Left lung (tissue), 14 donors: ENCODE measurements at regions of chrX and their contacts with region 1.

Region 1: DNA sequence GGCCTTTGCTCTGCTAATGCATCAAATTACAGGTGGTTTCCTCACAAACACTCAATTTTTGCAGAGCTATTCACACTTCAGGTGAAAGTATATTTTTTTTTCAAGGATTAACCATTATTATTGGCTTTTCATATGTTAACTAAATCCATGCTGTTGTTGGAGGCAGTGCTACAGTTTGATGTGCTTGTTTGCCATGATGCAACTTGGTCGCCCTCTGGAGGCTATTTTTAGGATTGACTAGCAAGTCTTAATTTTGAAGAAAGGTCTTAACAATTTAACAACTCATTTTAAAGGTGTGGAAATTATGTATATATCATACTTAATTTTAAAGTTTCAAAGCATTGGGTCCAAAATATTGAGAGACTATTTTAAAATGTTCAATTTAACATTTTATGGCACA is 168.8 kb upstream of the FAM47A start:
- DNase-seq: peak in 2 of 4 donors; percentile 11 to 27
- ATAC-seq: peak; percentile 40
- H3K4me3 ChIP-seq: no peak overlapping the region
- H3K27ac ChIP-seq: no peak overlapping the region
- H3K4me1 ChIP-seq: no peaks in the 10 kb centered on the region
- H3K27me3 ChIP-seq: no peaks in the 10 kb centered on the region
- CTCF ChIP-seq: peak in 1 of 2 donors; percentile 37

Region 2: GRCh38 chrX:33434256-33435092 is 866.4 kb before region 1 on chrX:
- intact Hi-C with region 1: loop called in 1 of 2 experiments (anchors 10 kb)
- DNase-seq: peak in 2 of 4 donors; percentile 51 to 59
- ATAC-seq: peak; percentile 91
- H3K4me3 ChIP-seq: no peak overlapping the region
- H3K27ac ChIP-seq: no peak overlapping the region
- H3K4me1 ChIP-seq: no peaks in the 10 kb centered on the region
- H3K27me3 ChIP-seq: no peaks in the 10 kb centered on the region
- CTCF ChIP-seq: peak; percentile 63 to 89